GM23248 (cell line): ENCODE measurements at regions of chr11 and their contacts with region 1.

Region 1: GRCh38 chr11:33976495-33977199 is 74.9 kb upstream of the CAPRIN1 start:
- DNase-seq: peak; percentile 65
- H3K4me3 ChIP-seq: no peak overlapping the region
- H3K27ac ChIP-seq: no peak overlapping the region
- H3K4me1 ChIP-seq: 0 out of 2 replicates have a peak, but pooled peaks cover 4% of the 10 kb centered on the region
- H3K27me3 ChIP-seq: peaks cover 42% of the 10 kb centered on the region

Region 2: DNA sequence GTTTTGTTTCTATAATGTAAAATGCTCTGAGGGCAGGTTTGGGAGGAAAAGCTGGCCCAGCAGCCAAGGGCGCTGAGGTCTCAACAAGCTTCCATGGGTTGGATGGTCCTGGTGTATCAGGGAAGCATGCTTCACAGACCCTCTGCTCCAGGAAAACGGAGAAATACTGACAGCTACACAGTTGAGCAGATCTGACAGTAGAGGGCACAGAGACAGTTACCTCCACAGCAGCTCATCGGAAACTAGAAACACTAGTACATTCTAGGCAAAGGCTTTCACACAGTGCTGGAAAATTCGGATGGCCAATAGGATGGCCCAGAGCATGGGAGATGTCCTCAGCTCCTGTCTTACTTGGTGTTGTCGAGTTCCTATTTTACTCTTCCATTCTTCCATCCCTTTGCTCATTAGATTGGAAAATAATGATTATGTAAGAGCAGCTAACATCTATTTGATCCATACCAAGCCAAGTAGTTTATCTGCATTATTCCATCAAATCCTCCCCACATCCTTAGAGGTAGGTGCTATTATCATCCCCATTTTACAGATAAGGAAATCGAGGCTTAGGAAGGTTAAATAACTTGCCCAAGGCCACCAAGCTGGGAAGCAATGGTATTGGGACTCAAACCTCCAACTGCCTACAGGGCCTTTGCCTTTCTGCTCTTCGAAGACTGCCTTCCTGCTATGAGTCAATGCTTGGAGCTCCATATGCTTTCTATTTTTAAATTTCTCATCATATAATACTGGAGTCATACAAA is 113.1 kb before region 1 on chr11:
- in situ Hi-C with region 1: loop called (anchors 5 kb)
- DNase-seq: no peak
- H3K4me3 ChIP-seq: no peak overlapping the region
- H3K27ac ChIP-seq: no peak overlapping the region
- H3K4me1 ChIP-seq: no peaks in the 10 kb centered on the region
- H3K27me3 ChIP-seq: peaks cover 76% of the 10 kb centered on the region

Region 3: GRCh38 chr11:33874910-33875490 is 101.6 kb before region 1 on chr11:
- in situ Hi-C with region 1: no loop called
- DNase-seq: no peak
- H3K4me3 ChIP-seq: no peak overlapping the region
- H3K27ac ChIP-seq: no peak overlapping the region
- H3K4me1 ChIP-seq: no peaks in the 10 kb centered on the region
- H3K27me3 ChIP-seq: peaks cover 64% of the 10 kb centered on the region

Region 4: DNA sequence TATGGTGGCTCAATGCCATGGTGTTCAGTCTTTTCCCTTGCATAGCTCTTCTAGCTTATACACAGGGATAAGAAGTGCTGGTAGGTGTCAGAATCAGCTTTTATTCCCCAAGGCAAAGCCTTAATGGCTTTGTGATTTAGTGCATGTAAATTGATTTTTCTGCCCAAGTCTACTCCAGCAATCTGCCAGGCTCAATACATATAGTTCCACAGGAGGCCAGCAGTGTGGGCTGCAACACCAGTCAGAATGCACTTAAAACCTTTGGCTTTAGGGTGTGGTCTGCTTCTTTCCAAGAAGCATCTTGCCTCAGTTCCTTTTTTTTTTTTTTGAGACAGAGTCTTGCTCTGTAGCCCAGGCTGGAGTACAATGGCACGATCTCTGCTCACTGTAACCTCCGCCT is 60.4 kb after region 1 on chr11:
- in situ Hi-C with region 1: no loop called
- DNase-seq: no peak
- H3K4me3 ChIP-seq: no peak overlapping the region
- H3K27ac ChIP-seq: no peak overlapping the region
- H3K4me1 ChIP-seq: no peaks in the 10 kb centered on the region
- H3K27me3 ChIP-seq: no peaks in the 10 kb centered on the region

Region 5: GRCh38 chr11:34278693-34279297 is 302.1 kb after region 1 on chr11:
- in situ Hi-C with region 1: no loop called
- DNase-seq: no peak
- H3K4me3 ChIP-seq: no peak overlapping the region
- H3K27ac ChIP-seq: no peak overlapping the region
- H3K4me1 ChIP-seq: peaks cover 27% of the 10 kb centered on the region
- H3K27me3 ChIP-seq: no peaks in the 10 kb centered on the region